Stomach (tissue), 19 donors: ENCODE measurements at regions of chr17 and their contacts with region 1.

Region 1: GRCh38 chr17:78013683-78014467 is 55.4 kb downstream of the TNRC6C start:
- DNase-seq: peak; percentile 40 to 90
- H3K4me3 ChIP-seq: no peak overlapping the region
- H3K27ac ChIP-seq: no peak overlapping the region
- H3K4me1 ChIP-seq: peaks cover 0 to 21% (median 3%) of the 10 kb centered on the region in 4 donors
- H3K27me3 ChIP-seq: no peaks in the 10 kb centered on the region
- CTCF ChIP-seq: peak in 5 of 7 experiments; percentile 38 to 74 (median 68)
- EP300 ChIP-seq: no peak
- POLR2A ChIP-seq: no peak

Region 2: GRCh38 chr17:77542551-77543490 is 471.1 kb before region 1 on chr17:
- intact Hi-C with region 1: loop called (anchors 10 kb)
- DNase-seq: peak; percentile 75 to 93
- H3K4me3 ChIP-seq: no peak overlapping the region
- H3K27ac ChIP-seq: no peak overlapping the region
- H3K4me1 ChIP-seq: peaks cover 0 to 9% (median 4%) of the 10 kb centered on the region in 4 donors
- H3K27me3 ChIP-seq: peaks cover 0 to 17% (median 9%) of the 10 kb centered on the region in 3 donors
- CTCF ChIP-seq: peak in 5 of 7 experiments; percentile 74 to 90 (median 82)
- EP300 ChIP-seq: no peak
- POLR2A ChIP-seq: no peak

Region 3: DNA sequence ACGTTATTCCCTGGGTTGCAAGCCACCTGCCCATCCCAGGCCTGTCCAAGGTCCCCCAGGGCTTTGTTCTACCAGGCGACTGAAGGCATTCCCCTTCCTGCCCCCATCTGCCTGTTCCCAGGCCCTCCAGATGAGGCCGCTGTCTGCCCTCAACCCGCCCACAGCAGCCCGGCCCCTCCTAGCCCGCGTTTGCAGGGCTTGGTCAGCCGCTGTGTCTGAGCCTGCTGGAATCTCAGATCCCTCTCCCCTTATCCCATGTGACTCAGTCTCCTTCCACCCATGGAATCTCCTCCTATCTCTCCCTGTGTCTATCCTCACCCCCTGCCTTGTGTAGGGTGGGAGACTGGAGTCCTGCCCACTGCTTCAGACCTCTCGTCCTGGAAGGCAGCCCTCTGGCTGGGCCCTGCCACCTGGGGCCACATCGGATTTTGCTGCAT is 241.4 kb before region 1 on chr17:
- intact Hi-C with region 1: loop called (anchors 10 kb)
- DNase-seq: peak; percentile 64 to 76
- H3K4me3 ChIP-seq: no peak overlapping the region
- H3K27ac ChIP-seq: no peak overlapping the region
- H3K4me1 ChIP-seq: peaks cover 0 to 20% (median 11%) of the 10 kb centered on the region in 4 donors
- H3K27me3 ChIP-seq: no peaks in the 10 kb centered on the region
- CTCF ChIP-seq: peak in 5 of 7 experiments; percentile 14 to 53 (median 28)
- EP300 ChIP-seq: no peak
- POLR2A ChIP-seq: no peak